ENCODE measurements at regions of chr6 and their contacts with region 1.

Region 1: DNA sequence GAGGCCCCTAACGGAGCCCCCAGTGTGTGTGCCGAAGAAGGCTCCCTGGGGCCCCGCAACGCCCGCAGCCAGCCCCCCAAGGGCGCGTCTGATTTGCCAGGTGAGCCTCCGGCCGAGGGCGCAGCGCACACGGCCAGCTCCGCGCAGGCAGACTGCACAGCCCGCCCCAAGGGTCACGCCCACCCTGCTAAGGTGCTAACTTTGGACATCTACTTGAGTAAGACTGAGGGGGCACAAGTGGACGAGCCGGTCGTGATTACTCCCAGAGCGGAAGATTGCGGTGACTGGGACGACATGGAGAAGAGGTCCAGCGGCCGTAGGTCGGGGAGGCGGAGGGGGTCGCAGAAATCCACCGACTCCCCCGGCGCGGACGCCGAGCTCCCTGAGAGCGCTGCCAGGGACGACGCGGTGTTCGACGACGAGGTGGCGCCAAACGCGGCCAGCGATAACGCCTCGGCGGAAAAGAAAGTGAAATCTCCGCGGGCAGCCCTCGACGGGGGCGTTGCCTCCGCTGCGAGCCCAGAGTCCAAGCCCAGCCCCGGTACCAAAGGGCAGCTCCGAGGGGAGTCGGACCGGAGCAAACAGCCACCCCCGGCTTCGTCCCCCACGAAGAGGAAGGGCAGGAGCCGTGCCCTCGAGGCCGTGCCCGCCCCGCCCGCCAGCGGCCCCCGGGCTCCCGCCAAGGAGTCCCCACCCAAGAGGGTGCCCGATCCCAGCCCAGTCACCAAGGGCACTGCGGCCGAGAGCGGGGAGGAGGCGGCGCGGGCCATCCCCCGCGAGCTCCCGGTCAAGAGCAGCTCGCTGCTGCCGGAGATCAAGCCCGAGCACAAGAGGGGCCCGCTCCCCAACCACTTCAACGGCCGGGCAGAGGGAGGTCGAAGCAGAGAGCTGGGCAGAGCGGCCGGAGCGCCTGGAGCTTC is 117.0 kb downstream of the RTN4IP1 start:
- DNase-seq: peak; percentile 87
- H3K4me3 Mint-ChIP-seq: peak overlapping the region; percentile 83
- H3K27ac Mint-ChIP-seq: peak overlapping the region; percentile 87
- H3K4me1 Mint-ChIP-seq: peaks cover 41% of the 10 kb centered on the region
- H3K27me3 Mint-ChIP-seq: no peaks in the 10 kb centered on the region

Region 2: DNA sequence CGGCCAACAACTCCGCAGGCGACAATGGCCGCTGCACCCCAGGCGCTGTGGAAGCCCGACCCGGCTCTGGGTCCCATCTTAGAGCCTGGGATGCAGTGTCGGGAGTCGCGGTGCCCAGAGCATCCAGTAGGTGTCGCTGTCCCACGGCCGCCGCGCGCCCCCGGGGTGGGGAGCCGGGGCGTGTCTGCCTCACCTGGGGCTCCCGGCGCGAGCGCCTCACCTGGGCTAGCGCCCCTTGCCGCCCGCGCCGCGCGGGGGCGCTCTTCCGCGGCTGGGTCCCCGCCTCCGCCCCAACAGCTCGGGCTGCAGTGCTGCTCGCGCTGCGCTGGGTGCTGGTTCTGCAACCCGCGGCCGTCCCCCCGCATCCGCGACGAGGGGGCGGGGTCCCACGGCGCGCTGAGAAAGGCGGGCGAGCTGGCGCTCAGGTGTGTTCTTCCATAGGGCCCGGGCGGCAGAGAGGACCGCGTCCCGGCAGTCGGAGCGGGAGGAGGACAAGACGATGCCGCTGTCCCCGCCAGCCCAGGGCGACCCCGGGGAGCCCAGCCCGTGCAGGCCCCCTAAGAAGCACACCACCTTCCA is 151.8 kb before region 1 on chr6 and contains the start of gene CRYBG1:
- CTCF ChIA-PET with region 1: no interaction called
- POLR2A ChIA-PET with region 1: no interaction called
- intact Hi-C with region 1: loop called (anchors 2 kb)
- DNase-seq: peak; percentile 83
- H3K4me3 Mint-ChIP-seq: peak within 1 kb of the TSS; percentile 68
- H3K27ac Mint-ChIP-seq: no peak within 1 kb of the TSS
- H3K4me1 Mint-ChIP-seq: peaks cover 9% of the 10 kb centered on the region
- H3K27me3 Mint-ChIP-seq: peaks cover 37% of the 10 kb centered on the region
- total RNA-seq, gene CRYBG1: 38.4 to 39.3 TPM

Region 3: GRCh38 chr6:106477790-106478189 is 34.5 kb before region 1 on chr6:
- CTCF ChIA-PET with region 1: interaction called, 13 read pairs
- POLR2A ChIA-PET with region 1: interaction called, 9 read pairs
- intact Hi-C with region 1: loop called (anchors 5 kb)
- DNase-seq: no peak
- H3K4me3 Mint-ChIP-seq: no peak overlapping the region
- H3K27ac Mint-ChIP-seq: no peak overlapping the region
- H3K4me1 Mint-ChIP-seq: peaks cover 9% of the 10 kb centered on the region
- H3K27me3 Mint-ChIP-seq: no peaks in the 10 kb centered on the region

Region 4: GRCh38 chr6:106534564-106534982 is 22.3 kb after region 1 on chr6:
- CTCF ChIA-PET with region 1: interaction called, 18 read pairs
- POLR2A ChIA-PET with region 1: interaction called, 16 read pairs
- intact Hi-C with region 1: loop called (anchors 1 kb)
- DNase-seq: peak; percentile 84
- H3K4me3 Mint-ChIP-seq: peak overlapping the region; percentile 17
- H3K27ac Mint-ChIP-seq: peak overlapping the region; percentile 92
- H3K4me1 Mint-ChIP-seq: peaks cover 85% of the 10 kb centered on the region
- H3K27me3 Mint-ChIP-seq: no peaks in the 10 kb centered on the region

Region 5: DNA sequence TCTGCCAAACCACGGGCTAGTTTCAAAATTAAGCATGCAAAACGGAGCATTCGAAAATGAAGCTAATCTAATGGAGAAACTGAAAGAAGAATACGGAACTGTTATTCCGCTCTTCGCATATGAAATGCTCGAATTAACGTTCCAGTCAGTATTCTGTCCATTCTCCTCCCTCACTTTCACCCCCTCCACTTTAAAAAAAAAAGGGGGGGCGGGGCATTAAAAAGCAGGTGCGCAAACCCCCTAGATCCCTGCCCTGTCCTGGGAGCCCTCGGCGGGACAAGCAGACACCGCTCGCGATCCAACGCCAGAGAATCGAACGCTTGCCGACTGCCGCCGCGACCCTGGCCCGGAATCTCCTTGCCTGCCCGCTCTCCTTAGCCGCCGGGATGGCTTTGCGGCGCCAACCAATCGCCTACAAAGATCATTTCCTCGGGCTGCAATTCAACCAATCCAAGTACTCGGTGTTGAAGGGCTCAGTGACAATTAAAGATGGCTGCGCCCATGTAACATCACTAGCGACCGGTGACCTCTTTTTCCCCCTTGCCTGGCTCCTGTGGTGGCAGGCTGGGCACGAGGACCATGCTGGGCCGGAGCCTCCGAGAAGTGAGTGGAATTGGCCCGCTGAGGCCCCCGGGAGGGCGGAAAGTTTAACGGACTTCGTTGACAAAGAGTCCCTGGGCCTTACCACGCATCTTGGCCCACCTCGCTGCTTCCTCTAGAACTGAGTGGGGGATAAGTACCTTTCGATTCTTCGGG is 117.0 kb after region 1 on chr6 and contains the starts of genes QRSL1 and RTN4IP1:
- CTCF ChIA-PET with region 1: no interaction called
- POLR2A ChIA-PET with region 1: interaction called, 3 read pairs
- intact Hi-C with region 1: loop called (anchors 5 kb)
- DNase-seq: peak; percentile 91
- H3K4me3 Mint-ChIP-seq: peak within 1 kb of the TSS; percentile 92
- H3K27ac Mint-ChIP-seq: peak within 1 kb of the TSS; percentile 94
- H3K4me1 Mint-ChIP-seq: peaks cover 15% of the 10 kb centered on the region
- H3K27me3 Mint-ChIP-seq: no peaks in the 10 kb centered on the region
- total RNA-seq, gene QRSL1: 13.2 to 13.9 TPM
- total RNA-seq, gene RTN4IP1: 8.0 to 8.5 TPM

Region 6: DNA sequence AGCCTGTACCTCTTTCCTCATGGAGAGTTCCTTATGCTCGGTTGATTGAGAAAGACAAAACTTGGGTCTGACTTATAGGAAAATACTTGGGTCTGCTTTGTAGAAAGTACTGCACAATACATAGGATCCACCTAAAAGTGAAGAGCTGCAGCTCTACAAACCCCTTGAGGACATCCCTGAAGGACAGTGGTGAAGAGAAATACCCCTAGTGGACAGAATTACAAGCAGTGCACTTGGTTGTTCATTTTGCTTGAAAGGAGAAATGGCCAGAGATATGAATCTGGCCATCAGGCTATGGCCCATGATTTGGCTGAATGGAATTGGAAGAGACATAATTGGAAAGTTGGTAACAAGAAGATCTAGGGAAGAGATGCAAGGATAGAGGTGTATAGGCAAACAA is 453.9 kb after region 1 on chr6:
- CTCF ChIA-PET with region 1: no interaction called
- POLR2A ChIA-PET with region 1: no interaction called
- intact Hi-C with region 1: no loop called
- DNase-seq: no peak
- H3K4me3 Mint-ChIP-seq: no peak overlapping the region
- H3K27ac Mint-ChIP-seq: no peak overlapping the region
- H3K4me1 Mint-ChIP-seq: no peaks in the 10 kb centered on the region
- H3K27me3 Mint-ChIP-seq: peaks cover 6% of the 10 kb centered on the region